Right ventricle myocardium superior (tissue), 1 donor: ENCODE measurements at regions of chr1 and their contacts with region 1.

Region 1: DNA sequence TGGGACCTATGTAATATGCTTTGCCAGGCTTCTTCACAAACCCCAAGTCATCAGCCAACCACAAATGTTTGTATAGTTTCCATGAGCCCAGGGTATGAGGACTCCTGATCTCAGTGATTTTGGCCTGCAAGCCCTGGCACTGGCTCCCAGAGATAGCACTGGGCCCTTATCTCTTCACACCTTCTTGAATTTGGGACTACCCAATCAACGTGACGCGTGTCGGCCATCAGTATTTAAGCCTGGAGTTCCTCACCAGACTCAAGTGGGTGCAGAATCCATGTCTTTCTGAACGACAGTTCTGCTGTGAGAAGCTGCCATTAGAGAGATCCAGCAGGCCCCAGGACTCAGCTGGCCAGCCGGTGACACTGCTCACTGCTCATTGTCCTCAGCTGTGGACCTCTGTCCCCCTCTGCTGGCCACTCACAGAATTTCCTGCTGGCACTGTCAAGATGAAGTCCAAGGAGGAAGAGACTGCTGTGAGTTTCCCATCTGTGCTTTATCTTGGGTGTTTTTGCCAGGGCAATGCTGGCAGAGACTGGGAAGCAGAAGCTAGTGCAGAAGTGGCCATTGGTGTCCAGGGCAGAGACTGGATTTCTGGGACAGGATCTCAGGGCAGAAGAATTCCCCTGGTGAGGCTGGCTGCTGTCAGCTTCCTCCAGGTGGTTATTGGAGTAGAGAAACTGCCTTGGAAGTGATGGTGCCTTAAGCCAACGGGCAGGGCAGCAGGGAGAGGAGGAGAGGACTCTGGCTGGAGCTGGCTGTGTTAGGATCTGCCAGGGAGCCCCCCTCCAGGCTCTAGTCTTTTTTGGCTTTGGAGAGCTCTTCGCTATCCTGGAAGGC is 28.4 kb downstream of the TMCC2 start:
- DNase-seq: peak; percentile 94
- ATAC-seq: peak; percentile 93

Region 2: DNA sequence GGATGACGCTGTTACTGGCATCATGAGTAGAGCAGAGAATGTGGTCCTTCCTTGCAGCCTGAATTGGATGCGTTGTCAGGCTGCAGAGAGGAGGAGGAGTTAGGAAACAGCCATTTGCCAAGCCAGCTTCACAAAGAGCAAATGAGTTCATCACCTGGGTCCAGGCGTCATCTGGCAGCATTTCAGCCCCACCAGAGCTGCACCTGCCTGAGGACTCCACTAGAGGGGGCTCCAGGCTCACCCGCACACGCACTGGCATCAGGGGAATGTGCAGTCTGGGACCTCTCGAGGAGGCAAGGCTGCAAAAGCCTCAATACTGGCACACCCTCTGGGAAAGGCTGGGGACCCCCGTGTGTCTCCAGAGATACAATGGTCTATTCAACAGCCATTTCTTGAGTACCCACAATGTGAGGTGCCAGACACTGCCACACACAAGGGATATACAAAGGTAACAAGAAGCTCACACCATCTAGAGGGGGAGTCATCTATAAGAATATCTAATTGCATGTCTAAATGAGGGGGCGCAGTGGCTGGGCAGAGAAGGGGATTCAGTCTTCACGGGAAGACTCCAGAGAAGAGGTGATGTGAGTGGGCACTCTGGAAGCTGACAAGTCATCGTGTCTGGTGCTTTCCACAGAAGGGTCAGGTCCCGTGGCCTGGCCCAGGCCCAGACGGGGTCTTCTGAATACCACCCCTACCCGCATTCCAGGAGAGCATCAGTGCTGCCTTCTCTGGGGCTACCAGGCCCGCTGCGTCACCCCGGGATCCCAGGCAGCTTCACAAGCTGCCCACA is 266.7 kb before region 1 on chr1:
- intact Hi-C with region 1: loop called (anchors 5 kb)
- DNase-seq: peak; percentile 77
- ATAC-seq: peak; percentile 93

Region 3: DNA sequence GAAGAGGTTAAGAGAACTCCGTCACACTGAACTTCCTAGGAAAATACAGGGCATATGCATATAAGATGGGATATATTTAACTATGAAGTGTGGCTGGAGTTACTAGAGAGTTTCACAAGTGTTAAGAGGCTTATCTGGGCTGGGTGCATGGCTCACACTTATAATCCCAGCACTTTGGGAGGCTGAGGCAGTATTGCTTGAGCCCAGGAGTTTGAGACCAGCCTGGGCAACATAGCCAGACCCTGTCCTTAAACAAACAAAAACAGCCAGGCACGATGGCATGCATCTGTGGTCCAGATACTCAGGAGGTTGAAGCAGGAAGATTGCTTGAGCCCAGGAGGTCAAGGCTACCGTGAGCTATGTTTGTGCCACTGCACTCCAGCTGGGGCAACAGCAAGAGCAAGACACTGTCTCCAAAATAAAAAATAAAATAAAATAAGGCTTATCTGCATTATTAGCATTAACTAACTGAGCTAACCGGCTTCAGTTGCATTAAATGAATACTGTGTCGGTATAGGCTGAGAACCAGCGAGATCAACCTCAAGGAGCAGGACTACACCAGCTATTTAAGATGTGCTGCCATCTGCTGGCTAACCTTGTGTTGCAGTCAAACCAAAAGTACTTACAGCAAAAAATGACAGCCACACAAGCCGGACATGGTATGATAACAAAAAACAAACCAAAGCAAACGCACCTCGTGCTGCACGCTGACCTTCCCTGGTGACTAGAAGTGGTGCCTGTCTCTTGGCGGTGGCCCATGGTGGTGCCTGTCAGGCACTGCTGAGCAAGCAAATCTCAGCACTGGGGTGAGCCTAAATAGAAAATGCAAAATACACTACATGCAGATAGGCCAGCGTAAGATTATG is 114.7 kb before region 1 on chr1:
- intact Hi-C with region 1: loop called (anchors 10 kb)
- DNase-seq: peak; percentile 55
- ATAC-seq: peak; percentile 84